MCF 10A (cell line): ENCODE measurements at regions of chr11 and their contacts with region 1.

Region 1: DNA sequence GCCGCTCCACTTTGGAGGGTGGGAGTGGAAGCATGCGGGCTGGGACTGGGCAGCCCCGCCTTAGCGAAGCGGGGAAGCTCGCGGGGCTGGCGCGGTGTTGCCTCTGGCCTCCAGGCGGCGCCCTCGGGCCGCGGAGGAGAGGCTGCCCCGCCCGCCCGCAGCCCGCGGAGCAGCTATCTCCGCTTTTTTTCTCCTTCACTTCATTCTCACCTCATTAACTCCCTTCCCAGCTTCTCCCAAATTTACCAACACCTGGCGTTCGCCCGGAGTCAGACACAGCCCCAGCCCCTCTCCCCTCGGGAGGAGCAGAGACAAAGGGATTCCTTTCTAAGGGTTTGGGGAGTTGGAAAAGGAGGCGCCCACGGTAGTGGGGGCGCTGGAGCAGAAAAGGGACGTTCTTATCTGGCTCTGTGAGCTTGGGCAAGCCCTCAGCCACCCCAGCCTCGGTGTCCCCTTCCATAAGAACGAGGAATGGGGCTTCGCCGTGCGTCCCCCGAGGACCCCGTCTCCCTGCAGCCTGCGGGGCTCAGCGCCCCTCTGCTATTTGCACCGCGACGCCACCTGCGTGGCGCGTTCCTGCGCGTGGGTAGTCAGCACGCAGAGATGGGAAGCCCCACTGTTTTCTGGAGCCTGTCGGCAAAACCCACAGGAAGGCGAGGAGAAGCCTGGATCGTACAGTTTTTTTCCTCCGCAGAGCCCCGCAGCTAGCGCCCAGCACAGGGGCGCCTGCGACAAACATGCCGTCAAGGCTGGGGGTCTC is 1.5 kb upstream of the WNT11 start:
- DNase-seq: peak; percentile 78
- H3K4me3 Mint-ChIP-seq: peak overlapping the region; percentile 69
- H3K27ac Mint-ChIP-seq: no peak overlapping the region
- H3K4me1 Mint-ChIP-seq: no peaks in the 10 kb centered on the region
- H3K27me3 Mint-ChIP-seq: no peaks in the 10 kb centered on the region
- CTCF ChIP-seq: peak; percentile 90

Region 2: GRCh38 chr11:76194872-76195668 is 12.8 kb before region 1 on chr11:
- CTCF ChIA-PET with region 1: interaction called, 15 read pairs
- POLR2A ChIA-PET with region 1: interaction called, 3 read pairs
- intact Hi-C with region 1: no loop called
- DNase-seq: no peak
- H3K4me3 Mint-ChIP-seq: no peak overlapping the region
- H3K27ac Mint-ChIP-seq: no peak overlapping the region
- H3K4me1 Mint-ChIP-seq: no peaks in the 10 kb centered on the region
- H3K27me3 Mint-ChIP-seq: no peaks in the 10 kb centered on the region
- CTCF ChIP-seq: no peak

Region 3: GRCh38 chr11:76266270-76267090 is 58.7 kb after region 1 on chr11:
- CTCF ChIA-PET with region 1: interaction called, 14 read pairs
- POLR2A ChIA-PET with region 1: no interaction called
- intact Hi-C with region 1: no loop called
- DNase-seq: peak; percentile 91
- H3K4me3 Mint-ChIP-seq: peak overlapping the region; percentile 29
- H3K27ac Mint-ChIP-seq: peak overlapping the region; percentile 97
- H3K4me1 Mint-ChIP-seq: peaks cover 9% of the 10 kb centered on the region
- H3K27me3 Mint-ChIP-seq: no peaks in the 10 kb centered on the region
- CTCF ChIP-seq: no peak

Region 4: GRCh38 chr11:76318744-76319384 is 111.0 kb after region 1 on chr11:
- CTCF ChIA-PET with region 1: interaction called, 271 read pairs
- POLR2A ChIA-PET with region 1: interaction called, 11 read pairs
- intact Hi-C with region 1: loop called (anchors 1 kb)
- DNase-seq: peak; percentile 80
- H3K4me3 Mint-ChIP-seq: no peak overlapping the region
- H3K27ac Mint-ChIP-seq: no peak overlapping the region
- H3K4me1 Mint-ChIP-seq: peaks cover 9% of the 10 kb centered on the region
- H3K27me3 Mint-ChIP-seq: no peaks in the 10 kb centered on the region
- CTCF ChIP-seq: peak; percentile 93

Region 5: DNA sequence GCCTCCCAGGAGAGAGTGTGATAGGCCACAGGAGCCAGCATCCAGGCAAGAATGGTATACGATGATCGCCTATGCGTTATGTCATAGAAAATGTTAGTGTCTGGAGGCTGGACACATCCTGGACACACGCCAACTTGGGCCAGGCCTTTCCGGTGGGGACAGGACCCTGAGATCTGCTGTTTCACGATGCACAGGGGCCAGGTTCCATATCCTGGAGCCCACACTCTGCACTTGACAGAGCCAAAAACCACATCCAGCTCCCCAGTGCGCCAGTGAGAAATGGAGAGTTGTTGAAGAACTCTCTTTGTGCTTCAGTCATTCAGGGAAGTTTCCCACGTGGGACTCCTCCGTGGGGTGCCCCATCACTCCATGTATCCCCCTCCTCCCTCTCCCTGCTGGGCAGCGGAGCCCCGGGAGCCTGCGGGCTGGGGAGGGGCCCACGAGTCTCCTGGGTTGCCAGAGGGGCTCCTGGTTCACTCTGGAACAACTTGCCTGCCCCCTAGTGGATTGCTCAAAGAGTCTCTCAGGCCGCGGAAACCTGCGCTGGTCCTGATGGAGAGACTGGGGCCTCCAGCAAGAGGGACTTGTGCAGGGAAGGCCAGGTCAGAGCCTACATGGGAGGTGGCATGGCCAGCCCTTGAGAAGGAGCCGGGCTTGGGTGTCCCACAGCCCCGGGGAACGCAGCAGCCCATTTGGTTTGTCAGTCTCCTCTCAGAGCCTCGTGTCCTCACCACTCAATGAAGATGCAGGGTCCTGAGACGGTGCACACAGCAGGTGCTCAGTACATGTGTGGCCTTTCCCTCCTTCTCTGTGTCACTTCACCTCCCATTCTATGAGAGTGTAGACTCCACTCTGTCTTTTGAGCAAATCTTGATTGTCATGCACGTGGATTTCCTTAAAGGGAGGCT is 472.9 kb after region 1 on chr11:
- CTCF ChIA-PET with region 1: interaction called, 3 read pairs
- POLR2A ChIA-PET with region 1: no interaction called
- intact Hi-C with region 1: loop called (anchors 1 kb)
- DNase-seq: peak; percentile 80
- H3K4me3 Mint-ChIP-seq: no peak overlapping the region
- H3K27ac Mint-ChIP-seq: no peak overlapping the region
- H3K4me1 Mint-ChIP-seq: no peaks in the 10 kb centered on the region
- H3K27me3 Mint-ChIP-seq: peaks cover 36% of the 10 kb centered on the region
- CTCF ChIP-seq: peak; percentile 70